Calu3 (cell line): ENCODE measurements at regions of chr3 and their contacts with region 1.

Region 1: GRCh38 chr3:181630853-181631252 is 80.9 kb upstream of the SOX2 start:
- DNase-seq: no peak
- H3K4me3 Mint-ChIP-seq: no peak overlapping the region
- H3K27ac Mint-ChIP-seq: no peak overlapping the region
- H3K4me1 Mint-ChIP-seq: peaks cover 19% of the 10 kb centered on the region
- H3K27me3 Mint-ChIP-seq: no peaks in the 10 kb centered on the region
- CTCF ChIP-seq: no peak

Region 2: DNA sequence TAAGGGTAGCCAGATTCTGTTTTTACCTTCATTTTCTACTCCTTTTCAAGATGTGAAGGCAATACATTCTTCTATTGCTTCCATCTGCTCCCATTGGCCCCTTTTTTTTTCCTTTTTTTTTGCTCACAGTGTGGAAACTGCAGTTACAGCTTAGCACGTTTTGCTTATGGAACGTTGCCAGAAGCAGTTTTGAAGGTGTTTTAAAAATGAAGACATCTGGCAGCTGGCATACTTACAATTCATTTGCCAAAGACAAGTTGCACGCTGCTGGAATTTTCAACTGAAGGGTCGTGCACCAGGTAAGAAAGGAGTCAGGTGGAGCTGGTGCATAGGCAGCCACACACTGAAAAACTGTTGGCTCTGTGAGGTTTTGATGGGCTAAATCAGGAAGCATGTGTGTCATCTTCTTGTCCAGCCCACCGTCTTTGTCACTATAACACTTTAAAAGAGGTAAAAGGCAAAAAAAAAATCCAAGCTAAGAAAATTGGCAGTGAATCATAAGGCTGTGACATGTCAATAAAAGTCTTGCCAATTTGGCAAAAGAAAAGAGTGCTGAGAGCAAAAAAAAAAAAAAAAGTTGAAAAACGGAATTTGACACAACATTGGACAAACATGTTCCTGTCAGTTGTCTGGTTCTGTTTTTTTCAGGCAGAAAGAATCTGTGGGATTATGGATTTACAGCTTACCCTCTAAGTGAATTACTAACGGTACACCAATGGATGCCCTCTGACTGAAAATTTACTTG is 144.5 kb before region 1 on chr3:
- CTCF ChIA-PET with region 1: interaction called, 10 read pairs
- intact Hi-C with region 1: no loop called
- DNase-seq: no peak
- H3K4me3 Mint-ChIP-seq: no peak overlapping the region
- H3K27ac Mint-ChIP-seq: no peak overlapping the region
- H3K4me1 Mint-ChIP-seq: no peaks in the 10 kb centered on the region
- H3K27me3 Mint-ChIP-seq: no peaks in the 10 kb centered on the region
- CTCF ChIP-seq: no peak

Region 3: DNA sequence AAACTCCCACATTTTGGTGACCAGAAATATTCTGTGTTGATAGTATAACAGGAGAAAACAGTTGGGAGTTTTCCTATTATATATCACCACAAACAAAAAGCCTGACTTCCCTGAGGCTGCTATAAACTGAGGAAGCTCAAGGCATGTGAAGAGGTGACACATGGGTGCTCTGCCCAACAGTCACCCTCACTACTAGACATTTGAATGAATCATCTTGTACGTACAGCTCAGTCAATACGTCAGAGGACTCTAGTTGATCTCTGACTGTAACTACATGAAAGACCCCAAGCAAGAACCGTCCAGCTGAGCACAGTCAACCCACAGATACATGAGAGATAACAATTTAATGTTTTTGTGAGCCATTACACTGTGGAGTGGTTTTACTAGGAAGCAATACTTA is 824.2 kb after region 1 on chr3:
- CTCF ChIA-PET with region 1: no interaction called
- intact Hi-C with region 1: no loop called
- DNase-seq: no peak
- H3K4me3 Mint-ChIP-seq: no peak overlapping the region
- H3K27ac Mint-ChIP-seq: no peak overlapping the region
- H3K4me1 Mint-ChIP-seq: no peaks in the 10 kb centered on the region
- H3K27me3 Mint-ChIP-seq: no peaks in the 10 kb centered on the region
- CTCF ChIP-seq: no peak